Cardiac septum (tissue), 1 donor: ENCODE measurements at regions of chr11 and their contacts with region 1.

Region 1: DNA sequence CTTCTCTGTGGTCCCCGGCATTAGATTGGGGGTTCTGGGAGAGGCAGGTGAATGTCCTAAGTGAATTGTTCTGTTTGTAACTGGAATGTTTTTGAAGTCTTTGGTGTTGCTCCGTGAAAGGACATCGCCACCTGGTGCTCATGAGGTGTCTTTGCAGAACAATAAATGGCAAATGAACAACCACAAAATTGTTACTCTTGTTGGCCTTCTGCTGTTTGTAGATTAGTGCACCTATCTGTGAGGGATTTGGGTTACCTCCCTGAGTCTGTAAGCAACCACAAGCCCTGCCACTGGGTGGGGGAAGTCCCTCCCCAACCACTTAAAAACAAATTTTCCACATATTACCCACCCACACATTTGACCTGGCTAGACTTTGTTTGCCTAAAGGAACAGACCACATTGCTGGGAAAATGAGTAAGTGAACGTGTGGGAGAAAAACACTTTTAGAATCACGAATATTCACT is 4.7 kb downstream of the MPEG1 start:
- DNase-seq: no peak

Region 2: GRCh38 chr11:59158206-59159068 is 49.6 kb before region 1 on chr11:
- intact Hi-C with region 1: no loop called
- DNase-seq: no peak

Region 3: DNA sequence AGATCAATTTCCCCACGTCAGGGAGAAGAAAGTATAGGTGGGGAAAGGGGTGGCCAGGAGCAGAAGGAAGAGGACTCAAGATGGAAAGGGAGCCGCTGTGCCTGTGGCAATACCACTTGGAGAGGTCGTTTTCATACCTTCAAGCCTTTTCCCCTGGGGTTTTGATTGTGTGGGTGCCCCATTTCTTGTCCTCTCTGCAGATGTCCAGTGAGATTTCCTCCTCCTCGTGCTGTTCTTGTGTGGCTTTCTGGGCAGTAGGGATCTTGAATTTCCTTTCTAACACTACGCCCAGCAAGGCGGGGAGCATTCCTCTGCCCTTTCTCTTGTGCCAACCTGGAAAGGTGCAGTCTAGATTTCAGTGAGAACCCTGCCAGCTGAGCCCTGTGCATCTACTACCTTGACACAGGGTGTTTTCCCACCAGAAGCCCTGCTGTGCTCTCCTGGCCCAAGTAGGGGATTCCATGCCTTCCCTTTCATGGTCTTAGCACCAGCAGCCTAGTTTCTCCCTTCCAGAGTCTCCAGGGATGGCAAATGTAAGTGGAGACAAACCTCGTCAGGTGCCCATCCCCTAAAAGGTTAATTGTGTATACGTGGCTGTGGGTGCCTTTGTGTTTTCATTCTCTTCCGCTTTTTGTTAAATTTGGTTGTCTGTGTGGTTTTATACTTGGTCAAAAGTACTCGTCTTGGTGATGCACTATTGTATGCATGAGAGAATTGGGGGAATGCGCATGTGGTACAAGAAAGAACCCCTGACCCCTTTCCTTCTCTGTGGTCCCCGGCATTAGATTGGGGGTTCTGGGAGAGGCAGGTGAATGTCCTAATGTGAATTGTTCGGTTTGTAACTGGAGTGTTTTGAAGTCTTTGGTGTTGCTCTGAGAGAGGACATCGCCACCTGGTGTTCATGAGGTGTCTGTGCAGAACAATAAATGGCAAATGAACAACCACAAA is 76.1 kb after region 1 on chr11:
- intact Hi-C with region 1: loop called (anchors 5 kb)
- DNase-seq: no peak